Heart right ventricle (tissue), 16 donors: ENCODE measurements at regions of chrX and their contacts with region 1.

Region 1: DNA sequence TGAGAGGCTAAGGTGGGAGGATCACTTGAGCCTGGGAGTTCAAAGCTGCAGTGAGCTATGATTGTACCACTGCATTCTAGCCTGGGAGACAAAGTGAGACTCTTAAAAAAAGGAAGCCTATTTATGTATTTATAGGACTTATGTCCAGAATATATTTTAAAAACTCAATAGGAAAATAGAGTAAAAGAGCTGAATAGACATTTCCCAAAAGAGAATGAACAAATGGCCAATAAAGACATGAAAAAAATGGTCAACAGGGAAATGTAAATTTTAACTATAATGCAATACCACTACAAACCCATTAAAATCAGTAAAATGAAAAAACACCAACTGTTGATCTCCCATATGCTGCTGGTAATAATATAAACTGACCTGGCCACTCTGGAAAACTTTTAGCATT is 115.0 kb downstream of the HUWE1 start:
- DNase-seq: no peak
- ATAC-seq: no peak
- H3K4me3 ChIP-seq: no peak overlapping the region
- H3K27ac ChIP-seq: no peak overlapping the region
- H3K4me1 ChIP-seq: peaks cover 0 to 5% (median 0%) of the 10 kb centered on the region in 9 donors
- H3K27me3 ChIP-seq: peaks cover 0 to 27% (median 0%) of the 10 kb centered on the region in 7 donors
- CTCF ChIP-seq: no peak

Region 2: GRCh38 chrX:53093748-53094583 is 477.5 kb before region 1 on chrX and contains the start of gene KANTR:
- intact Hi-C with region 1: no loop called
- DNase-seq: peak; percentile 74 to 92
- ATAC-seq: peak; percentile 89 to 97 (median 95)
- H3K4me3 ChIP-seq: peak within 1 kb of the TSS; percentile 47 to 78 (median 72)
- H3K27ac ChIP-seq: peak within 1 kb of the TSS; percentile 65 to 90 (median 86)
- H3K4me1 ChIP-seq: peaks cover 0 to 15% (median 8%) of the 10 kb centered on the region in 9 donors
- H3K27me3 ChIP-seq: peaks cover 0 to 4% (median 0%) of the 10 kb centered on the region in 7 donors
- CTCF ChIP-seq: peak in 3 of 9 donors; percentile 6 to 23 (median 12)
- total RNA-seq, gene KANTR: 2.7 to 11.5 (median 7.0) TPM

Region 3: GRCh38 chrX:53556868-53557267 is 14.6 kb before region 1 on chrX:
- intact Hi-C with region 1: loop called in 1 of 10 experiments (anchors 1 kb)
- DNase-seq: no peak
- ATAC-seq: peak in 2 of 8 donors; percentile 37 to 82
- H3K4me3 ChIP-seq: no peak overlapping the region
- H3K27ac ChIP-seq: no peak overlapping the region
- H3K4me1 ChIP-seq: no peaks in the 10 kb centered on the region
- H3K27me3 ChIP-seq: peaks cover 0 to 41% (median 0%) of the 10 kb centered on the region in 7 donors
- CTCF ChIP-seq: no peak

Region 4: DNA sequence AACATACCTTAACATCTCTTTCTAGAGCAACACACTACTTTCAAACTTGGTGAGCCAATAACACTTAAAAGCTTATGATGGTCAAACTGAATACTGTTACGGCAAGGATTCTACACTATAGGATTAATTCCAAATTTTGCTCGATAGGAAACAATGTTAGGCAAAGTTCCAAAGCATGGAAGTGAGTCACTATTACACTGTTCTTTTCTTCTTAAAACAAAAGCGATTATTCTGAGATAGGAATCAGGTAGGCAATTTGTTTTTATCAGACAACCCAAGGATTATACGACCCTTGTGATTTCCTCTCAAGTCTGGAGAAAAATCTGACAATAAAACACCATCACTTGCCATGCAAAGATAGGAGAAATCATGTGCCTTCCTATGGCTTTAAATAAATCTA is 33.5 kb after region 1 on chrX:
- intact Hi-C with region 1: no loop called
- DNase-seq: no peak
- ATAC-seq: no peak
- H3K4me3 ChIP-seq: no peak overlapping the region
- H3K27ac ChIP-seq: no peak overlapping the region
- H3K4me1 ChIP-seq: no peaks in the 10 kb centered on the region
- H3K27me3 ChIP-seq: peaks cover 0 to 30% (median 0%) of the 10 kb centered on the region in 7 donors
- CTCF ChIP-seq: no peak